Activated naive CD4-positive, alpha-beta T cell treated with anti-CD3 and anti-CD28 coated beads for 36 hours (primary cell): ENCODE measurements at regions of chr12 and their contacts with region 1.

Region 1: GRCh38 chr12:57751788-57752667 is at the start of gene CDK4:
- DNase-seq: peak; percentile 99
- H3K4me3 Mint-ChIP-seq: peak within 1 kb of the TSS; percentile 100
- H3K27ac Mint-ChIP-seq: peak within 1 kb of the TSS; percentile 99
- H3K4me1 Mint-ChIP-seq: peaks cover 51% of the 10 kb centered on the region
- H3K27me3 Mint-ChIP-seq: no peaks in the 10 kb centered on the region
- total RNA-seq, gene CDK4: 194 to 202 TPM

Region 2: GRCh38 chr12:57693659-57694458 is 58.2 kb before region 1 on chr12 and contains the start of gene OS9:
- CTCF ChIA-PET with region 1: no interaction called
- intact Hi-C with region 1: loop called (anchors 2 kb)
- DNase-seq: peak; percentile 99
- H3K4me3 Mint-ChIP-seq: no peak within 1 kb of the TSS
- H3K27ac Mint-ChIP-seq: no peak within 1 kb of the TSS
- H3K4me1 Mint-ChIP-seq: peaks cover 3% of the 10 kb centered on the region
- H3K27me3 Mint-ChIP-seq: no peaks in the 10 kb centered on the region
- total RNA-seq, gene OS9: 60.7 to 60.9 TPM

Region 3: DNA sequence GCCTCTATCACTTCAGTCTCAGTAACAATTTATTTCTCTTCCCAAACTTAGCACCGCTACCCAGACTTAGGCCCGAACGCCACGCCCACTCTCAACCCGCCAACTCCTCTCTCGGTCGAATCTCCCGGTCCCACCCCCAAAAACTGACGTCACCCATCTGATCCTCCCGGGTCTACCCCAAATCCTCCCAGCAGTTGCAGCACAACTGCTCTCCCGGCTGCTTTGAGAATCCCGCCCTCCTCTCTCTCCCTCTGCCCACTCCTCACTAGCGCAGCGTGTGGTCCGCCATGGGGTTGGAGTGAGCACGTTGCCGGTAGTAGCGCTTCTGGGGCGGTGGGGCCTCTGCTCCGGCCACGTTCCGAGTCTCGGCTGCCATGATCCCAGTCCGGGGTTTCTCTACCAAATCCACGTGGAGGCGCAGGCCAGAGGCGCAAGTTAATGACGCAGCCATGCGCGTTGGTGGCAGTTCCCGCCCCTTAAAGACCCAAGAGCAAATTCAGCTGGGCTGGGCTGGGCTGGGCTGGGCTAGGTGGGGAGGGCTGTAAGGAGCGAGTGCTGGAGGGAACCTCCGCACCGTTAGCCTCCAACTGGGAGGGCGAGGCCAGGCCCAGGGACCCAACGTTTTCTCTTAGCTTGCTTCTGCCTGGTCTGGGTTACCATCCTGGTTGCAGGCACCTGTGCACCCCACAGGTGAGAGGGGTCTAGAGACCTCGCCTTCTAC is 19.8 kb after region 1 on chr12 and contains the start of gene METTL1:
- CTCF ChIA-PET with region 1: interaction called, 42 read pairs
- intact Hi-C with region 1: loop called (anchors 1 kb)
- DNase-seq: peak; percentile 97
- H3K4me3 Mint-ChIP-seq: peak within 1 kb of the TSS; percentile 98
- H3K27ac Mint-ChIP-seq: peak within 1 kb of the TSS; percentile 95
- H3K4me1 Mint-ChIP-seq: peaks cover 26% of the 10 kb centered on the region
- H3K27me3 Mint-ChIP-seq: peaks cover 2% of the 10 kb centered on the region
- total RNA-seq, gene METTL1: 17.3 to 20.4 TPM

Region 4: DNA sequence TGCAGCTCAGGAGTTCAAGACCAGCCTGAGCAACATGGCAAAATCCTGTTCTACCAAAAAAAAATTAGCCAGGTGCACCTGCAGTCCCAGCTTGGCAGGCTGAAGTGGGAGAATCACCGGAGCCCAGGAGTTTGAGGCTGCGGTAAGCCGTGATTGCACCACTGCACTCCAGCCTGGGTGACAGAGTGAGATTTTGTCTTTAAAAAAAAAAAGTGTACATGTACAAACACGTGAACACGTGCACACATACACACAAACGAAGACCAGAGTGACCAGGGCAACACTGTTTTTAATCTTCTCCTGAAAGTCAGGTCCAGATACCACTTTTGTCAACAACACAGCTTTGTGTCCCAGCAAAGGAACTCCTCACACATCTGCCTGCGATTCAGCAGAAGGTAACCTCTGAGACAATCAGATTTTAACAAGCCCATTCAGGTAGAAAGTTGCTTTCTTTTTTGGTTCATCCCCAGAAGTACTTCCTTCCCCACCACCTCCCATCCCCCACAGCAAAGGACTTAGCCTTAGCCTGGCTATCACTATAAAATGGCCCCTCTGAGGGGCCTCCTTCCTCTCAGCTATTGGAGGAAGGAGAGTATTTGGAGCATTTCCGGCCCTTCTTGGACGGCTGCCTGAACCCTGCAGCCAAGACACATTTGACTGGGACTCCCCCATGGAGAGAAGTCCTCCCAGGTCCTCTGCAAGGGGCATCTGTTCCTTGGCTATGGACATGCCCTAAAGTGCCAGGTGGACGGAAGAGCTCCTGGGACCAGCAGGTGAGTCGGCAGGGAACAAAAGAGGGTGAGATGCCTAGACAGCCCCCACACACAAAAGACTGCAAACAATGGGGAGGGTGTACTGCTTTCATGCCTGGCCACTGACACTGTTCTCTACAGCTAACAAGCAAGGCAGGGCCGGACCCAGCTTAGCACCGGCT is 84.7 kb after region 1 on chr12:
- CTCF ChIA-PET with region 1: interaction called, 7 read pairs
- intact Hi-C with region 1: loop called (anchors 1 kb)
- DNase-seq: peak; percentile 81
- H3K4me3 Mint-ChIP-seq: peak overlapping the region; percentile 40
- H3K27ac Mint-ChIP-seq: peak overlapping the region; percentile 89
- H3K4me1 Mint-ChIP-seq: peaks cover 97% of the 10 kb centered on the region
- H3K27me3 Mint-ChIP-seq: no peaks in the 10 kb centered on the region

Region 5: GRCh38 chr12:57941165-57941894 is 189.3 kb after region 1 on chr12 and contains the start of gene ATP23:
- CTCF ChIA-PET with region 1: no interaction called
- intact Hi-C with region 1: loop called (anchors 1 kb)
- DNase-seq: peak; percentile 90
- H3K4me3 Mint-ChIP-seq: peak within 1 kb of the TSS; percentile 94
- H3K27ac Mint-ChIP-seq: peak within 1 kb of the TSS; percentile 96
- H3K4me1 Mint-ChIP-seq: peaks cover 38% of the 10 kb centered on the region
- H3K27me3 Mint-ChIP-seq: no peaks in the 10 kb centered on the region
- total RNA-seq, gene ATP23: 11.3 to 11.9 TPM